ENCODE measurements at regions of chr1 and their contacts with region 1.

Region 1: DNA sequence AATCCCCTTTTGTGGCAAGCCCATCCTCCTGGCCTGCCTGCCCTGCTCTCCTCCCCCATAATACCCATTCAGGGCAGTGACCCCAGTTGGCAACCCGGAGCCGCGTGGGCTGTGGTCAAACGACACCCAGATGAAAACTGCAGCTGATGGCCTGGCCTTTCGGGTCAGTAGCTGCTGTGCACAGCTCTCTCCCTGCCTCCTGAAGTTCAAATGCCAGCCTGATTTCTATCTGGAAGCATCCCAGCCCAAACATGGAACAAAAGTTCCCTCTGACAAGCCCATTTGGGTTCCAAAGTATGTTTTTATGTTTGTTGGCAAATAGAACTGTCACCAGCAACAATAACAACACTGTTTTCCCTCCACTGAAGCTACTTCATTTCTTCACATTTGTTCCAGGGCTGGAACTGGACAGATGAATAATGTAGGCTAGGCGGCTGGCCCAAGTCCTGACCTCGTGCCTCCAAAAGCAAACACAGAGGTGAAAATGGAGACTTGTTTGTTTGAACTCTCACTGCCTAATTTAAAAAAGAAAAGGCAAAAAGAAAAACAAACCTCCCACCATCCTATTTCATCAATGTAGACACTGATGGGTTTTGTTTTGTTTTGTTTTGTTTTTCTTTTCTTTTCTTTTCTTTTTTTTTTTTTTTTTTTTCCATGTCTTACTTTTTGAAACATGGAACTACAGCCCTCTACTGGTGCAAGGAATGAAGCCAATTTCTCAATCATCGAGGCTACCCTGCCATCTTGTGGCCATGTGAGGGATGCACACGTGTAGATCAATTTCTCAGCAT is 179.0 kb downstream of the ADSS2 start:
- DNase-seq: peak in 9 of 10 donors; percentile 44 to 92 (median 69)

Region 2: DNA sequence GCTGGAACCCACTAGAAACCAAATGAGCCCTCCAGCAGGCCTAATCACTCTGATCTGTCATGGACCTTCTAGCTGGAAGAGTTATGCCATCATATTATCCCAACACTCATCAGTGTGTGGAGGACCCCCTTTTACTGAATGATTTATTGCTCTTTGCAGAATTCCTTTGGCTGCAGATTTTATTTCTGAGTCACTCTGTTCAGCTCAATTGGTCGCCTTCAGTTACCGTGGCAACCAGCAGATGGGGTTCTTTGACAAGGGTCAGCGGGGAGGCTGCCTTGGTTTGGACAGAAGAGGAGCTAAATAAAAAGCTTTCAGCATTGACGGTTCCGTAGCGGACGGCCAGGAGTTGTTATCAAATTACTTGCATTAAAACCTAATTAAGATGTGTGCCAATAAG is 796.7 kb before region 1 on chr1:
- intact Hi-C with region 1: loop called (anchors 2 kb)
- DNase-seq: peak in 8 of 10 donors; percentile 68 to 96 (median 78)

Region 3: GRCh38 chr1:243748706-243749283 is 523.9 kb before region 1 on chr1:
- intact Hi-C with region 1: loop called (anchors 10 kb)
- DNase-seq: no peak

Region 4: GRCh38 chr1:244054247-244054923 is 218.3 kb before region 1 on chr1:
- intact Hi-C with region 1: loop called (anchors 2 kb)
- DNase-seq: peak in 5 of 10 donors; percentile 37 to 91 (median 49)

Region 5: DNA sequence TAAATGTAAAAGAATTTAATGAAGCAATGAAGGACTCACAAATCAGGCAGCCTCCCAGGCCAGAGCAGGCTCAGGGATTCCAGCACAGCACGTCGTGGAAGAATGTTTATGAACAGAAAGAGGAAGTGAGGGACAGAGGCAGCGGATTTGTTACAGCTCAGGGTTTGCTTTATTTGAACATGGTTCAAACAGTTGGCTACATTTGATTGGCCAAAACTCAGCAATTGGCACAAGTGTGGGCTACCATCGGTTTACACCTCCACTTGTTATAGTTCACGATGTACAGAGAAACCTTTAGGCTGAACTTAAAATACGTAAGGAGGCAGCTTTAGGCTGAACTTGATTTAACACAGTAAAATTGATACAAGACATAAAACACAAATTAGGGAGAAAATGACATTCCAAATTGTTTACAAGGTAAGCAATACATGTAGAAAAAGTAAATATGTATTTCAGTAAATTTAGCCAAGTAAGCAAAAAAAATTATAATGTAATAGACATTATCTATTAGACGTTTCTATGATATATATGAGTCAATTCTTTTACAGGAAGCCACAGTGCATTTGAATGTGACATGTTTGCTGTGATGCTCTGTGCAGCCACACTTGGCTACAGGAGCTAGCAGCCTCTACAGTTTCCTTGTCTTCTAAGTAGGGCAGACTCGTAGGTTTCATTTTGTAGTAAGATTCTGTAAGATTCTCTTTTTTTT is 52.5 kb after region 1 on chr1:
- intact Hi-C with region 1: no loop called
- DNase-seq: no peak

Measured in posterior cingulate gyrus (tissue), 11 donors.